PC-9 (cell line): ENCODE measurements at regions of chr13 and their contacts with region 1.

Region 1: GRCh38 chr13:101757446-101758039 is 305.1 kb downstream of the ITGBL1 start:
- DNase-seq: peak in 1 of 2 experiments; percentile 58
- H3K4me3 ChIP-seq: no peak overlapping the region
- H3K27ac ChIP-seq: no peak overlapping the region
- H3K4me1 ChIP-seq: no peaks in the 10 kb centered on the region
- H3K27me3 ChIP-seq: no peaks in the 10 kb centered on the region
- CTCF ChIP-seq: peak; percentile 89

Region 2: GRCh38 chr13:101307181-101307701 is 450.3 kb before region 1 on chr13:
- CTCF ChIA-PET with region 1: no interaction called
- POLR2A ChIA-PET with region 1: no interaction called
- intact Hi-C with region 1: loop called (anchors 10 kb)
- DNase-seq: no peak
- H3K4me3 ChIP-seq: no peak overlapping the region
- H3K27ac ChIP-seq: no peak overlapping the region
- H3K4me1 ChIP-seq: peaks cover 12% of the 10 kb centered on the region; the same call in 1 of the 2 replicates
- H3K27me3 ChIP-seq: no peaks in the 10 kb centered on the region
- CTCF ChIP-seq: no peak

Region 3: GRCh38 chr13:101416174-101417042 is 341.1 kb before region 1 on chr13 and contains the start of gene NALCN:
- CTCF ChIA-PET with region 1: no interaction called
- POLR2A ChIA-PET with region 1: no interaction called
- intact Hi-C with region 1: loop called (anchors 10 kb)
- DNase-seq: peak; percentile 51 to 55
- H3K4me3 ChIP-seq: peak within 1 kb of the TSS; percentile 88
- H3K27ac ChIP-seq: peak within 1 kb of the TSS; percentile 89
- H3K4me1 ChIP-seq: peaks cover 33% of the 10 kb centered on the region
- H3K27me3 ChIP-seq: no peaks in the 10 kb centered on the region
- CTCF ChIP-seq: no peak
- total RNA-seq, gene NALCN: 7.7 and 8.8 TPM in 2 replicates

Region 4: GRCh38 chr13:101514788-101515187 is 242.8 kb before region 1 on chr13:
- CTCF ChIA-PET with region 1: interaction called, 3 read pairs
- POLR2A ChIA-PET with region 1: no interaction called
- intact Hi-C with region 1: loop called (anchors 1 kb)
- DNase-seq: peak; percentile 29 to 64
- H3K4me3 ChIP-seq: no peak overlapping the region
- H3K27ac ChIP-seq: no peak overlapping the region
- H3K4me1 ChIP-seq: no peaks in the 10 kb centered on the region; the same call in 1 of the 2 replicates
- H3K27me3 ChIP-seq: no peaks in the 10 kb centered on the region
- CTCF ChIP-seq: peak; percentile 92

Region 5: GRCh38 chr13:101730420-101731000 is 27.0 kb before region 1 on chr13:
- CTCF ChIA-PET with region 1: no interaction called
- POLR2A ChIA-PET with region 1: no interaction called
- intact Hi-C with region 1: no loop called
- DNase-seq: no peak
- H3K4me3 ChIP-seq: no peak overlapping the region
- H3K27ac ChIP-seq: no peak overlapping the region
- H3K4me1 ChIP-seq: no peaks in the 10 kb centered on the region
- H3K27me3 ChIP-seq: no peaks in the 10 kb centered on the region
- CTCF ChIP-seq: no peak